MCF 10A (cell line): ENCODE measurements at regions of chr1 and their contacts with region 1.

Region 1: GRCh38 chr1:5514519-5515183 is 477.6 kb downstream of the NPHP4 start:
- DNase-seq: peak; percentile 53
- H3K4me3 Mint-ChIP-seq: no peak overlapping the region
- H3K27ac Mint-ChIP-seq: no peak overlapping the region
- H3K4me1 Mint-ChIP-seq: peaks cover 9% of the 10 kb centered on the region
- H3K27me3 Mint-ChIP-seq: peaks cover 43% of the 10 kb centered on the region
- CTCF ChIP-seq: peak; percentile 98

Region 2: DNA sequence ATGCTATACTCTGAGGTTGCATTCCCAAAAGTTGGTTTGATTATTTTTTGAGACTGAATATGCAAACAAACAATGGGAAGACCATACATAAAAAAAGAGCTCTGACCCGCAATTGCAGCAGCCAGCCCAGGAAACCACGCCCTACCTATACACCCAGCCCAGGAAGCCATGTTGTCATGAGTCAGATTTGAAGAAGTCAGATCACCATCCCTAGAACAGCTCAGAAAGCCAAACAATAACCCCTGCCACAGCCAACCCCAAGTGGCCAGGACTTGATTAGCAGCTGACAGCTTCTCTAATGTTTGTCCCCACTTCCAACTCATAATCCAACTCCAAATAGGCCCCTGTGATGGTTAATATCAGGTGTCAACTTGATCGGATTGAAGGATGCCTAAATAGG is 144.3 kb before region 1 on chr1:
- CTCF ChIA-PET with region 1: interaction called, 4 read pairs
- POLR2A ChIA-PET with region 1: no interaction called
- intact Hi-C with region 1: loop called (anchors 10 kb)
- DNase-seq: peak; percentile 20
- H3K4me3 Mint-ChIP-seq: no peak overlapping the region
- H3K27ac Mint-ChIP-seq: peak overlapping the region; percentile 49
- H3K4me1 Mint-ChIP-seq: peaks cover 14% of the 10 kb centered on the region
- H3K27me3 Mint-ChIP-seq: peaks cover under 1% of the 10 kb centered on the region
- CTCF ChIP-seq: no peak

Region 3: DNA sequence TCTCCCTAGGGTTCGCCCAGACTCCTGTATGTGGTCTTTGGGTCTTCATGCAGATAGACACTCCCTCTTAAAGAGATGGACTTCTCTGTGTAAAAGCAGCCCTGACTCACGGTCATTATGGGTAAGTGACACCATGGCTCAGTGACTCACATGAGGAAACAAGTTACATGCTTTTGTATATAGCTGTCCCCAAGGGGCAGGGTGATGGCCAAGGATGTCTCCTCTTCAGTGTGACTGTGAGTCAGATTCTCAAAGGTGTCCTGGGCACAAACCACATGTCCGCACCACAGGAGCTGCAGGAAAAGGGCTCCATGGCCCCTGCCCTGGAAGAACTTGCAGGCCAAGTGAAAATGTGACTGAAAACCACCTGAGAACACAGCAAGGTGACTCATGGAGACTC is 97.2 kb after region 1 on chr1:
- CTCF ChIA-PET with region 1: interaction called, 19 read pairs
- POLR2A ChIA-PET with region 1: no interaction called
- intact Hi-C with region 1: no loop called
- DNase-seq: no peak
- H3K4me3 Mint-ChIP-seq: no peak overlapping the region
- H3K27ac Mint-ChIP-seq: no peak overlapping the region
- H3K4me1 Mint-ChIP-seq: peaks cover 26% of the 10 kb centered on the region
- H3K27me3 Mint-ChIP-seq: peaks cover 9% of the 10 kb centered on the region
- CTCF ChIP-seq: no peak

Region 4: GRCh38 chr1:5637171-5637570 is 122.5 kb after region 1 on chr1:
- CTCF ChIA-PET with region 1: interaction called, 21 read pairs
- POLR2A ChIA-PET with region 1: no interaction called
- intact Hi-C with region 1: no loop called
- DNase-seq: peak; percentile 51
- H3K4me3 Mint-ChIP-seq: no peak overlapping the region
- H3K27ac Mint-ChIP-seq: no peak overlapping the region
- H3K4me1 Mint-ChIP-seq: no peaks in the 10 kb centered on the region
- H3K27me3 Mint-ChIP-seq: peaks cover 16% of the 10 kb centered on the region
- CTCF ChIP-seq: peak; percentile 72

Region 5: GRCh38 chr1:5667513-5668325 is 153.1 kb after region 1 on chr1:
- CTCF ChIA-PET with region 1: no interaction called
- POLR2A ChIA-PET with region 1: no interaction called
- intact Hi-C with region 1: no loop called
- DNase-seq: peak; percentile 26
- H3K4me3 Mint-ChIP-seq: no peak overlapping the region
- H3K27ac Mint-ChIP-seq: no peak overlapping the region
- H3K4me1 Mint-ChIP-seq: peaks cover 9% of the 10 kb centered on the region
- H3K27me3 Mint-ChIP-seq: no peaks in the 10 kb centered on the region
- CTCF ChIP-seq: no peak

Region 6: GRCh38 chr1:5745776-5746610 is 231.3 kb after region 1 on chr1:
- CTCF ChIA-PET with region 1: interaction called, 144 read pairs
- POLR2A ChIA-PET with region 1: interaction called, 4 read pairs
- intact Hi-C with region 1: loop called (anchors 1 kb)
- DNase-seq: peak; percentile 75
- H3K4me3 Mint-ChIP-seq: no peak overlapping the region
- H3K27ac Mint-ChIP-seq: no peak overlapping the region
- H3K4me1 Mint-ChIP-seq: peaks cover 6% of the 10 kb centered on the region
- H3K27me3 Mint-ChIP-seq: peaks cover 18% of the 10 kb centered on the region
- CTCF ChIP-seq: peak; percentile 97

Region 7: DNA sequence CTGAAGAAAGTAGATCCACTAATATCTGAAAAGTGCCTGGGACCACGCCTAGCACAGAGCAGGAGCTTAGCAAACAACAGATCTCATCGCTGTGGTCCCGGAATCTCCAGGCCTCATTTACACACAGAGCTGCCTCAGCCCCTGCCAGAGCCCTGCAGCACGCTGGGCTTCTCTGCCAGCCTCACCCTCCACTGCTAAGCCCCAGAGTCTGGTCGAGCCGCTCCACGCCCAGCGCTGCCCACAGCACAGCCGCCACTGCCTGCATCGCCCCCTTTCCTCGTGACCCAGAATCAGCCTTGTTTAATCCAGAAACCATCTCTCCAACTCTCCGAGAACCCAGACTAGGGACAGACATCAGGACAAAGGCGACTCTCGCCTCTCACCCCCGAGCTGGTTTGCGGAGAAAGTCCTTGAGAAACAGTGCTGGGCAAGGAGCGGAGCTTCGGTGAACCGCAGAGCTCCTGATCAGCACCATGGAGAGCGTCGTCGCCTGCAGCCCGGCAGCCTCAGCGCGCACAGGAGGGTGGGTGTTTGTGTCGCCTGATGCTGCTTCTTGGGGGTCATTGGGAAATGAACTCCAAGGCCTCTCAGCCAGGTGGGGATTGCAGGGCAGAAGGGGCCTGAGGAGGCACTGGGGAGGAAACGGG is 332.5 kb after region 1 on chr1:
- CTCF ChIA-PET with region 1: no interaction called
- POLR2A ChIA-PET with region 1: no interaction called
- intact Hi-C with region 1: loop called (anchors 5 kb)
- DNase-seq: no peak
- H3K4me3 Mint-ChIP-seq: no peak overlapping the region
- H3K27ac Mint-ChIP-seq: no peak overlapping the region
- H3K4me1 Mint-ChIP-seq: no peaks in the 10 kb centered on the region
- H3K27me3 Mint-ChIP-seq: peaks cover 9% of the 10 kb centered on the region
- CTCF ChIP-seq: no peak